Activated B cell treated with CpG ODN at 0.5 μM for 24 hours (primary cell): ENCODE measurements at regions of chr13 and their contacts with region 1.

Region 1: DNA sequence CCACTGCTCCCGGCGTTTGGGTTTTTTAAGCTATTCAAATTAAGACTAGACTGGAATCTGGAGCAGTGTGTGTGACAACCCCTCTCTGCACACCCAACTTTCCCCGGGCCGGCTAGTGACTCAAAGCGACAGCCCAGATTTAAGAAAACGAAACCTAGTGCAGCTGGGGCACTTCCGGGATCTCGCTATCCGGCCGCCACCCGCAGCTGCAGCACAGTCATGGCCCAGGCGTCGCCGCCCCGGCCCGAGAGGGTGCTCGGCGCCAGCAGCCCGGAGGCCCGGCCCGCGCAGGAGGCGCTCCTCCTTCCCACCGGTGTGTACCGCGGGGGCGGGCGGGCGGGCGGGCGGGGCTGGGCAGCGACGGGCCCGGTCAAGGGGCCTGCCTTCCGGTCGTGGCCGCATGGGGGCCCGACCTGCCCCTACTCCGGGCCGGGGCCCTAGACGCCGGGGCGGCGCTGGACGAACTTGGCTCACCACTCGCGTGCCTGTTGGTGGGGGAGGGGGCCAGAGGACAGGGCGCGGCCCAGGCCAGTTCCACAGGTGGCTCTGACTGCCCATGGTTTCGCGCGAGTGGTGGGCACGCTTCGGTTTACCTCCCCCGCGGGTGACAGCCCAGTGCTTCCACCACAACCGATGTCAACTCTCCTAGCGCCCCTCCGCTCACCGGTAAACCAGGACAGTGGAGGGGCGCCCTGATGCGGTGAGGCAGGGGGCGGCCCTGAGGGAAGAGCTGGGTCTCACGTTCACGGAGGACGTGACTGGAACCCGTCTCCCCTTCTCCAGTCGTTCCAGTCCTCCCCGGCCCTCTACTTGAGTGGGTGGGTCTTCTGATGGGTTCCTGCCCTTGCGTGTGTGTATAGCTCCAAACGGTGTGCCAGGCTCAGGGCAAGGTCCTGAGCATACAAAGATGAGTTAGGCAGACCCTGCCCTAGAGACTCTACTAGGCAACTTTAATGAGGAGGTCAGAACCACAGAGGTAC is at the start of gene PHF11:
- DNase-seq: peak; percentile 78
- ATAC-seq: peak; percentile 82
- H3K4me3 Mint-ChIP-seq: peak within 1 kb of the TSS; percentile 98
- H3K27ac Mint-ChIP-seq: peak within 1 kb of the TSS; percentile 100
- H3K4me1 Mint-ChIP-seq: peaks cover 44% of the 10 kb centered on the region
- H3K27me3 Mint-ChIP-seq: no peaks in the 10 kb centered on the region
- CTCF ChIP-seq: no peak
- total RNA-seq, gene PHF11: 128 and 148 TPM in 2 replicates

Region 2: DNA sequence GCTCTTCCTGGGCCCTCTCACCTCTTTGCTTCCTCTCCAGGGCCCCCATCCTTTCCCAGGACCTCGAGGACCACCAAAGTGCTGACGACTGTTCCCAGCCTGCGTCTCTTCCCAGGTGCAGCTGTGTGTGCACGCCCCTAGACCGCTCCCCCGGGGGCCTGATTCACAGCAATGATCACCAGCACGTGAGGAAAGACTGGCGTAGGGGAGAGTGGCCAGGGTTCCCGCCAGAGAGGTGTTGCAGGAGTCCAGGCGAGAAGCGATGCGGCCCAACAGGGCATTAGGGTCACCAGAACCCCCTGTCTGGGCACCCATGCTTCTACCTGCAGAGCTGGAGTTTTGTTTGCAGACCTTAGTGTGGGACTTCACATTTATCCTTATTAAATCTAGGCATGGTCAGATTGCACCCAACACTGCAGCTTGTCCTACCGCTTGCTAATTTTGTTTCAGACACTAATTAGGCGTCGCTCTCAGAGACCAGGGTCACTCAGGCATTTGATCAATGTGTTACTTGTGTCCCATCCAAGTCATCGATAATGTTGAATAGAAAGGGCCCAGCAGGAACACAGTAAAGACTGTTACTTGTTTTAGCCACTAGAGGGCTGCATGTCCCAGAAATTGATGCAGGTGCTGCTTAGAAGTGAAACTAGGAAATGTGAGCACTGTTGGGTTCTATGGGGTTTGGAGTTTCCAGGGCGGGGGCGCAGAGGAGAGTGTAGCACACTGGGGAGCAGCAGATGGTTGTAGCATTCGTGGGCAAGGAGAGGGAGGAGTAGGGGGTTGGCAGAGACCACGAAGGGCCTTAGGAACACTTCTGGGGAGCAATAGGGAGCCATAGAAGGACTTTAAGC is 195.1 kb before region 1 on chr13:
- CTCF ChIA-PET with region 1: no interaction called
- POLR2A ChIA-PET with region 1: no interaction called
- intact Hi-C with region 1: loop called (anchors 2 kb)
- DNase-seq: peak; percentile 43
- ATAC-seq: peak; percentile 98
- H3K4me3 Mint-ChIP-seq: peak overlapping the region; percentile 80
- H3K27ac Mint-ChIP-seq: peak overlapping the region; percentile 72
- H3K4me1 Mint-ChIP-seq: peaks cover 33% of the 10 kb centered on the region
- H3K27me3 Mint-ChIP-seq: no peaks in the 10 kb centered on the region
- CTCF ChIP-seq: no peak

Region 3: GRCh38 chr13:49517461-49517860 is 21.4 kb after region 1 on chr13:
- CTCF ChIA-PET with region 1: no interaction called
- POLR2A ChIA-PET with region 1: interaction called, 15 read pairs
- intact Hi-C with region 1: no loop called
- DNase-seq: no peak
- ATAC-seq: no peak
- H3K4me3 Mint-ChIP-seq: no peak overlapping the region
- H3K27ac Mint-ChIP-seq: no peak overlapping the region
- H3K4me1 Mint-ChIP-seq: peaks cover 4% of the 10 kb centered on the region
- H3K27me3 Mint-ChIP-seq: no peaks in the 10 kb centered on the region
- CTCF ChIP-seq: no peak

Region 4: GRCh38 chr13:49540552-49540951 is 44.5 kb after region 1 on chr13:
- CTCF ChIA-PET with region 1: no interaction called
- POLR2A ChIA-PET with region 1: interaction called, 15 read pairs
- intact Hi-C with region 1: no loop called
- DNase-seq: no peak
- ATAC-seq: peak; percentile 34
- H3K4me3 Mint-ChIP-seq: peak overlapping the region; percentile 57
- H3K27ac Mint-ChIP-seq: peak overlapping the region; percentile 78
- H3K4me1 Mint-ChIP-seq: peaks cover 31% of the 10 kb centered on the region
- H3K27me3 Mint-ChIP-seq: no peaks in the 10 kb centered on the region
- CTCF ChIP-seq: no peak

Region 5: DNA sequence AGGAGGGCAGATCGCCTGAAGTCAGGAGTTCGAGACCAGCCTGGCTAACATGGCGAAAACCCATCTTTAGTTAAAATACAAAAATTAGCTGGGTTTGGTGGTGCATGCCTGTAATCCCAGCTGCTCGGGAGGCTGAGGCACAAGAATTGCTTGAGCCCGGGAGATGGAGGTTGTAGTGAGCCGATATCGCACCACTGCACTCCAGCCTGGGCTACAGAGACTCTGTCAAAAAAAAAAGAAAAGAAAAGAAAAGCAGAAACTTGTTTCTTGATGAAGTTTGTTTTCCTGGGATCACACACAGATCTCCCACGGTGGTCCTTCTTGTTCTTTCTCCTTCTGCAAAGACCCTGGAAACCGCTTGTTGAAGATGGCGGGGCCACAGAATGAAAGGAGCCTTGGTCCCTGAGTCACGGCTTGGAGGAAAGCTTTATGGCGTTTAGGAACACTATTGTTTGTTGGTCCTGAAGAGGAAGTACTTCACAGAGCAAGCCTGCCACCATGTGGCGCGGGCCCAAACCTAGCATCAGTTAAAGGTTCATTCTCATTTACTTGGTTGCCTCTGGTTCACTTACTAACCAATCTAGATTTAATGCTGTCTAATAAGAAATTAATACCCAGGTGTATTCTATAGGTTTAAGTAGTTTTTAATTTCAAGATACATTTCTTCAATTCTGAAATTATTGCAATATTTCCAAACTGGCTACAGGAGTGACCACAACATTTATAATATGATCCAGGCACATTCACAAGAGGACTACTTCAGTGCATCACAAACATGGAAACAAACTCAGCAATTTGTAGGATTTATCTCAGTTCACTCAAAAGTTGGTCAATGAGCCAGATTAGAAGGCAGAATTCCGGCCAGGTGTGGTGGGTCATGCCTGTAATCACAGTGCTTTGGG is 110.9 kb after region 1 on chr13:
- CTCF ChIA-PET with region 1: interaction called, 7 read pairs
- POLR2A ChIA-PET with region 1: interaction called, 5 read pairs
- intact Hi-C with region 1: loop called (anchors 1 kb)
- DNase-seq: peak; percentile 64
- ATAC-seq: peak; percentile 96
- H3K4me3 Mint-ChIP-seq: peak overlapping the region; percentile 81
- H3K27ac Mint-ChIP-seq: peak overlapping the region; percentile 79
- H3K4me1 Mint-ChIP-seq: peaks cover 26% of the 10 kb centered on the region
- H3K27me3 Mint-ChIP-seq: no peaks in the 10 kb centered on the region
- CTCF ChIP-seq: no peak

Region 6: GRCh38 chr13:49936085-49936940 is 440.2 kb after region 1 on chr13 and contains the start of gene SPRYD7:
- CTCF ChIA-PET with region 1: no interaction called
- POLR2A ChIA-PET with region 1: interaction called, 4 read pairs
- intact Hi-C with region 1: loop called (anchors 2 kb)
- DNase-seq: peak; percentile 100
- ATAC-seq: peak; percentile 98
- H3K4me3 Mint-ChIP-seq: peak within 1 kb of the TSS; percentile 97
- H3K27ac Mint-ChIP-seq: peak within 1 kb of the TSS; percentile 91
- H3K4me1 Mint-ChIP-seq: peaks cover 32% of the 10 kb centered on the region
- H3K27me3 Mint-ChIP-seq: no peaks in the 10 kb centered on the region
- CTCF ChIP-seq: no peak
- total RNA-seq, gene SPRYD7: 3.7 and 4.5 TPM in 2 replicates